Activated CD4-positive, alpha-beta memory T cell treated with anti-CD3 and anti-CD28 coated beads for 36 hours (primary cell): ENCODE measurements at regions of chr2 and their contacts with region 1.

Region 1: DNA sequence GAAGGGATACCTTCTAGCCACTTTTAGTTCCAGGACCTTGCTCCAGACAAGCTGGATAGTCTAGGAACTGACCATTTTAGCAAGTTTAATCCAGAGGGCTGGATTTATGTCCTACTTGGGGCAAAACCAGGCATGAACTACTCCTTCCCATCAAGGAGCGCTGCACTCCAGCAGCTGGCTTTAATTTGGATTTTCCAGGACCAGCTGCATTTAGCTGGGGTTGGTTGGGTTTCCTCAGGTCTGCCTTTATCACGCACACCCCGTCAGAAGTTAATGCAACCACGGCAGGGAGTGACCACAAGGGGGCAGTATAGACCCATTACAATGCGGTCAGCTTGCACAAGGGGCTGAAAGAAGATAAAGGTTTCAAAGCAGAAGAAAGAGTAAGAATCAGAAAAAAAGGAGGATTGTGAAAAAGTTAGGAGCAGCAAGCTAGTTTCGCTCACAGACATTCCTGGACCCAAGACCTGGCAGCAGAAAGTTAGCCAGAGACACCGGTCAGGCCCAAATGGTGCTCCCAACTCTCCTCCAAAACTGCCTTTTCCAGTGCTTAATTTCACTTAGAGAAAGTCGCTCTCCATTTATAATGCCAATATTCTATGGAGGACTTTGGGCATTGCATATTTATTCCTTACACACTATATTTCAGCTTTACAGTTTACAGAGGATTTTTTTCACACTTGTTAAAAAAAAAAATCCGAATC is 40.1 kb downstream of the SLC4A1AP start:
- DNase-seq: peak; percentile 92
- H3K4me3 Mint-ChIP-seq: no peak overlapping the region
- H3K27ac Mint-ChIP-seq: peak overlapping the region; percentile 10
- H3K4me1 Mint-ChIP-seq: peaks cover 26% of the 10 kb centered on the region
- H3K27me3 Mint-ChIP-seq: no peaks in the 10 kb centered on the region

Region 2: DNA sequence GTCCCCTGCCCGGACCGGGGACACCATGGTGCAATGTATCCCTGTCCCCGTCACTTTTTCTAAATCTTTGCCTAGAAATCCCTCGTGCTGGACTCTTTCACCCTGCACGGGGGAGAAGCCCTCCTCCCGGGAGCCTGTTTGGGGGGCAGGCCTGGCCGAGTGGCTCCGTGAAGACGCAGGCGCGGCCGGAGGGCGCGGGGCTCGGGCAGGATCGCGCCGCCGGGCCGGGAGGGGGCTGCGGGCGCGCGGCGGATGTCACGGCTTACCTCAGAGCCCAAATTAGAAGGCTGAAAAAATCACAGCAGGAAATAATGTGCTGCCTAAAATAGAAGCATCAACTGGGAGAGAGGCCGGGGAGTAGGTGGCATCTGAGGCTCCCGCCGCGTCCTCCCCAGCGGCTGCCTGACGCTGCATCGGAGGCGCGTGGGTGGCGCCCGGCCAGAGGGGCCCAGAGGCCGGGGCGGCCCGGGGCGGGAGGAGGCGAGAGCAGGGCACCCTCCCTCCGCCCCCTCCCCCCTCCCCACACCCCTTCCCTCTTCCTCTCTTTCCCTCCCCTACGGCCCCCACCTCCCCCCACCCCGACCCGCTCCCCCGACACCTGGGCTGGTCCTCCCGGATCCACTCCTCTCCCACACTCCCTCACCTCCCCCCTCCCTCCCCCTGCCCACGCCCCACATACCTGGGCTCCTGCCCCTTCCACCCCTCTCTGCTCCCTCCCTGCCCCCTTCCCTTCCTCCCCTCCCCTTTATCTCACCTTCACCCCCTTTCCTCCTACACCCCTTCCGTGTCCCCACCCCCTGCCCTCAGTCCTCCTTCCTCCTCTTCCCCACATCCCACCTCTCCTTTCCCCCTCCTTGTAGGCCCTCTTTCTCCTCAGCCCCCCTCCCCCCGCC is 11.8 kb after region 1 on chr2:
- CTCF ChIA-PET with region 1: interaction called, 16 read pairs
- POLR2A ChIA-PET with region 1: interaction called, 4 read pairs
- intact Hi-C with region 1: no loop called
- DNase-seq: peak; percentile 63
- H3K4me3 Mint-ChIP-seq: peak overlapping the region; percentile 45
- H3K27ac Mint-ChIP-seq: no peak overlapping the region
- H3K4me1 Mint-ChIP-seq: peaks cover 42% of the 10 kb centered on the region
- H3K27me3 Mint-ChIP-seq: peaks cover 13% of the 10 kb centered on the region

Region 3: DNA sequence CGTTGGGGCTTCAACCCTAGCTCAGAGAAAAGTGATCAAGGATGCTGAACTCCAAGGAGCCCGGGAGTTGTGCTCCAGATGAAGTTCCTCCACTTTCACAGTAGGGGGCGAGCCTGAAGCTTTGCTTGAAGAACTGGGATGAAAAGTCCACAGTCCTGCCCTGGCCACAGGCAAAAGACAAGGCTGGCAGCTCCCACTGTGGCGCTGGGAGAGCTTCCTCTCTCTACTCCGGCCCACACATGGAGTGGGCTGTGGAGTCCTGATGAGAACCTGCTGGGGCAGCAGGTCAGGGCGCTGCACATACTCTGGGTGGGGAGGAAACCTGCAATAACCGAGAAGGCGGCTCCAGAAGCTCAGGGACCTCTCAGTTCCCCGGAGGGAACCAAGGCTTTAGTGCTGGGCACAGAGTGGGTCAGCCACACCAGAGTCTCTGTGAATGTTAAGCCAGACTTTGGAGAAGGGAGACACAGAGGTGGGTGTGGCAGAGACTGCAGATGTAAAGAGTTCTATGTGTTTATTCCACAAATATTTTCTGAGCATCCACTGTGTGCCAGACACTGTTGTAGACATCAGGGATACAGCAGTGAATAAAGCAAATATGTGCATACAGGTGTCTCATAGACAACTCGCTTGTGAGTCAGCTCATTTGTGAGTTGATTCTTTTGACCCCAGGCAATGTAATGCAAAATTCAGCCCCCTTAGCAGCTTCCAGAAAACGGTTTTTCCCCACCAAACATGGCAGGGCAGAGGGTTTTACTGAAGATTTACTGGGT is 19.8 kb after region 1 on chr2:
- CTCF ChIA-PET with region 1: interaction called, 43 read pairs
- POLR2A ChIA-PET with region 1: no interaction called
- intact Hi-C with region 1: no loop called
- DNase-seq: peak; percentile 44
- H3K4me3 Mint-ChIP-seq: no peak overlapping the region
- H3K27ac Mint-ChIP-seq: no peak overlapping the region
- H3K4me1 Mint-ChIP-seq: peaks cover 29% of the 10 kb centered on the region
- H3K27me3 Mint-ChIP-seq: peaks cover 2% of the 10 kb centered on the region

Region 4: DNA sequence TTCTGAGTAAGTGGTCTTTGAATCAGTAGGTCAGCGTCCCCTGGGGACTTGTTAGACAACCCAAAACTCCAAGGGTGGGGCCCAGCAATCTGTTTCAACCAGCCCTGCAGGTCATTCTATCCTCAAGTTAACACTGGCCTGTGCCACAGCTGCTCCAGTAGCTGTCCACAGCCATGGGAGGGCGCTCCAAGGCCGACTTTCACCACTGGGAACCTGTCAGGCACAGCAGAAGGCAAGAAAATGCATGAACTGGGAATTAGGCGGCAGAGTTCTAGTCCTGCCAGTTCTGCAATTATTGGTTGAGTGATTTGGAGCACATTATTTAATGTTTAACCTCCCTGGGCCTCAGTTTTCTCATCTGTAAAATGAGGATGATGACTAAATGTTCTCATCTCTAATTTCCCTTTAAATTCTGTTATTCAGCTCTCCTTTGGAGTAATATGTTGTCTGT is 50.4 kb after region 1 on chr2:
- CTCF ChIA-PET with region 1: interaction called, 9 read pairs
- POLR2A ChIA-PET with region 1: no interaction called
- intact Hi-C with region 1: loop called (anchors 5 kb)
- DNase-seq: peak; percentile 91
- H3K4me3 Mint-ChIP-seq: no peak overlapping the region
- H3K27ac Mint-ChIP-seq: peak overlapping the region; percentile 30
- H3K4me1 Mint-ChIP-seq: peaks cover 14% of the 10 kb centered on the region
- H3K27me3 Mint-ChIP-seq: peaks cover 10% of the 10 kb centered on the region

Region 5: DNA sequence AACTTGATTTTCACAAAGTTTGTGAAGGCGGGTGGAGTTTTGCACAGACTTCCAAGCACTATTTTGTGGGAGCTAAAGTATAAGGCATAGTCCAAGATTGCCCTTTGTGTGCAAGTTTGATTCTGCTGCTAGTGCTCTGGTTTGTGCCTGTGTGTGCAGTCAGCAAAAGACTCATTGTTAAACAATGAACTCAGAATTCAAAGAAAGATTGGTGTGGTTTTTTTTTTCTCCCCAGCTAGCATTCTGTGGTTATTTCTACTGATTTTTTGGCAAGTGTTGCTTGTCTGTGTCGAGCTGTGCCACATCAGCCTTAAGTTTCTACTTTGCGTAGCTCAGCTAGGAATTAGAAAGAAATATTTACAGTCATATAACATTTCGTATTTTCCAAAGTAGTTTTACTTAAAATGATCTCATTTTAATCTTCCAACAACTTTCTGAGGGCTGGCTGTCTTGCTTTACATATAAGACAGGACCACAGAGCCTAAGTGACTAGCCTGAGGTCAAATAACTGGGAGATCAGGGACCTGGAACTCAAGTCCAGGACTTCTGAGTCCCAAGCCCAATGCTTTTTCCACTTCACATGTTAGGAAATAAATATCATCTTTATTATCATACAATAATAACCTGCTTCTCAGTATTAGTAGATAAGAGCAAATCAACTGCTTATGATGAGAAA is 256.6 kb after region 1 on chr2:
- CTCF ChIA-PET with region 1: no interaction called
- POLR2A ChIA-PET with region 1: no interaction called
- intact Hi-C with region 1: loop called (anchors 10 kb)
- DNase-seq: peak; percentile 33
- H3K4me3 Mint-ChIP-seq: peak overlapping the region; percentile 5
- H3K27ac Mint-ChIP-seq: peak overlapping the region; percentile 67
- H3K4me1 Mint-ChIP-seq: peaks cover 75% of the 10 kb centered on the region
- H3K27me3 Mint-ChIP-seq: no peaks in the 10 kb centered on the region

Region 6: DNA sequence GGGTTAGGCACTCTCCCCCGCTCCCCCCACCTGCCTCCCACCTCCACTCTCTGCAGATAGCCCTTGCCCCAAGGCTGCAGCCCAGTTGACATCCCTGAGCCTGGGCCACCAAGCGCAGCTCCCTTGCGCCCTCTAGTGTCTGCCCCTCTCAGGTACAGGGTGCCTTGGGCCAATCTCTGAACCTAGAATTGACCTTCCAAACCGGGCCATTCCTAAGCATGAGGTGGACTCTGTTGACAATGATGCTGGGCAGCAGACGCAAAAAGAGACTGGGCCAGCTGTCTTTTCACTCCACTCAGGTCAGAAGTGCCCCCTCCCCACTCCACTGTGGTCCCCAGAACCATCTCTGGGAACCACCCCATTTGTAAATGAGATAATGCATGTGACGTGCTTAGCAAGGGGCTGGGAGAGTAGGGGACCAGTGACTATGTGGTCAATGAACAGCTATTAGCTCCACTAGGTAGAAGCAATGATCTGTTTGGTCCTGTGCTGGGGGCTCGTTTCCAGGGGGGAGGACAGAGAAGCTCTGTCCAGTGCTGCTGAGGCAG is 748.8 kb after region 1 on chr2:
- CTCF ChIA-PET with region 1: interaction called, 9 read pairs
- POLR2A ChIA-PET with region 1: no interaction called
- intact Hi-C with region 1: loop called (anchors 5 kb)
- DNase-seq: peak; percentile 89
- H3K4me3 Mint-ChIP-seq: no peak overlapping the region
- H3K27ac Mint-ChIP-seq: peak overlapping the region; percentile 59
- H3K4me1 Mint-ChIP-seq: peaks cover 45% of the 10 kb centered on the region
- H3K27me3 Mint-ChIP-seq: no peaks in the 10 kb centered on the region